MCF 10A (cell line): ENCODE measurements at regions of chr12 and their contacts with region 1.

Region 1: DNA sequence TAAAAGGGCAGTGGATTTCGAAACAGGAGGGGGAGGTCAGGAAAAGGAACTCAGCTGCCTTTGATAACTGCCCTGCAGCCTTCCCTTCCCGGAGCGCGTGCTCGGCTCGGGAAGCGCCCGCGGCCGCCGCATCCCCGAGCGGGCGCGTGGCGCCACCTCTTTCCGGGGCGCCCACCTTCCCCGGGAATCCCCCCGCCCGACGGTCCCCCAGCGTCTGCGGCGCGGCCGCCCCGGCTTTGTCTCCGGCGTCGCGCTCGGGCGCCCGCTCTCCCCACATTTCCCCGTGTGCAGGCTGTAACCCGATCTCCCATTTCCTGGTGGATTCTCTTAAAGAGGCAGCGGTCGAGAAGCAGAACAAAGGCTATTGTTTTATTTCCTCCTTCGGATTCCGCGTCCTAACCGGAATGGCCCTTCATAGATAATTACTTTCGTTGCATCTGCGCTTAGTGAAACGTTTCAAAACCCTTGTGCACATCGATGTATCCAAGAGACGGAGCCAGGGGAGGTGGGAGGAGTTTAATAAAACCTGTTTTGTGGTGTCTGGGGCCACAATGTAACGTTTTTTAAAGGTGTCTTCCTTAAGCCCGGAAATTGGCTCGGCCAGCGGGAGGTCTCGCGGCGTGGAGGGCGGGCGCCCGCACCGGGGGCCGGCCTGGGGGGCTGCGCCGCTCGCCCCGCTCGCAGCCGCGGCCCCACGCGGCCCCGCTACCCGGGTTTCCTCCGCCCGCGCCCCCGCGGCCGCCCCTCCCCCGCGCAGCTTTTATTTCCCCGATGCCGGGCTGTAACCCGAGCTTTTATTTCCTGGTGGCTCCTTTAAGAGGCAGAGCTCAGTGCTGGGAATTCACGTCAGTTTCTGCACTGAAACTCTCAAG is at the start of gene ETV6:
- DNase-seq: peak; percentile 92
- H3K4me3 Mint-ChIP-seq: peak within 1 kb of the TSS; percentile 82
- H3K27ac Mint-ChIP-seq: peak within 1 kb of the TSS; percentile 77
- H3K4me1 Mint-ChIP-seq: peaks cover 15% of the 10 kb centered on the region
- H3K27me3 Mint-ChIP-seq: no peaks in the 10 kb centered on the region
- CTCF ChIP-seq: no peak
- total RNA-seq, gene ETV6: 16.9 and 19.3 TPM in 2 replicates

Region 2: GRCh38 chr12:10901427-10901826 is 747.6 kb before region 1 on chr12:
- CTCF ChIA-PET with region 1: no interaction called
- POLR2A ChIA-PET with region 1: no interaction called
- intact Hi-C with region 1: no loop called
- DNase-seq: no peak
- H3K4me3 Mint-ChIP-seq: no peak overlapping the region
- H3K27ac Mint-ChIP-seq: no peak overlapping the region
- H3K4me1 Mint-ChIP-seq: no peaks in the 10 kb centered on the region
- H3K27me3 Mint-ChIP-seq: no peaks in the 10 kb centered on the region
- CTCF ChIP-seq: no peak

Region 3: DNA sequence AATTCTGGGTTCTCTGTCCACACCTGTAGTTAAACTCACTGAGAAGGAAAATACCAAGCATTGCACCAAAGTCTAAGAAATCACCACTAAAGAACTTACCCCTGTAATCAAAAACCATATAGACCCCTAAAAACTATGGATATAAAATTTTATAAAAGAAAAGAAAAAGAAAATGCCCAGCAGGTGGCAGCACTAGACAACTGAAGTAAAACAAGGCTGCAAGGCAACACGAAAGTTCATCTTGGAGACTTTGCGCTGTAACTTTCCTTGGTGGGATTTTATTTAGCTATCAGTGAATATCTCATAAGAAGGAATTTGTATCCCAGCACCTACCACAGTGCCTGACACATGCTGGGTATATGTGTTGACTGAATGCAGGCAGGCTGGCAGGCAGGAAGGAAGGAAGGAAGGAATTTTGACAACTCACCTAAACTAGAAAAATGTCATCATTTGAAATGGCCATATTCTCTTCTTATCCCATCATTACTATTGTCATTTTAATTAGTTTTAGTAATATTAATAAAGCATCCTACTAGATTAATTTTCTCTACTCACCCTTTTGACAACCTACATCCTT is 67.8 kb before region 1 on chr12:
- CTCF ChIA-PET with region 1: interaction called, 6 read pairs
- POLR2A ChIA-PET with region 1: interaction called, 21 read pairs
- intact Hi-C with region 1: loop called (anchors 1 kb)
- DNase-seq: peak; percentile 76
- H3K4me3 Mint-ChIP-seq: no peak overlapping the region
- H3K27ac Mint-ChIP-seq: no peak overlapping the region
- H3K4me1 Mint-ChIP-seq: peaks cover 44% of the 10 kb centered on the region
- H3K27me3 Mint-ChIP-seq: no peaks in the 10 kb centered on the region
- CTCF ChIP-seq: peak; percentile 52

Region 4: GRCh38 chr12:11695321-11695720 is 46.3 kb after region 1 on chr12:
- CTCF ChIA-PET with region 1: interaction called, 3 read pairs
- POLR2A ChIA-PET with region 1: interaction called, 5 read pairs
- intact Hi-C with region 1: loop called (anchors 5 kb)
- DNase-seq: peak; percentile 63
- H3K4me3 Mint-ChIP-seq: no peak overlapping the region
- H3K27ac Mint-ChIP-seq: peak overlapping the region; percentile 57
- H3K4me1 Mint-ChIP-seq: peaks cover 29% of the 10 kb centered on the region
- H3K27me3 Mint-ChIP-seq: no peaks in the 10 kb centered on the region
- CTCF ChIP-seq: no peak

Region 5: GRCh38 chr12:11785712-11786111 is 136.6 kb after region 1 on chr12:
- CTCF ChIA-PET with region 1: no interaction called
- POLR2A ChIA-PET with region 1: interaction called, 19 read pairs
- intact Hi-C with region 1: loop called (anchors 5 kb)
- DNase-seq: peak; percentile 97
- H3K4me3 Mint-ChIP-seq: no peak overlapping the region
- H3K27ac Mint-ChIP-seq: peak overlapping the region; percentile 34
- H3K4me1 Mint-ChIP-seq: peaks cover 18% of the 10 kb centered on the region
- H3K27me3 Mint-ChIP-seq: no peaks in the 10 kb centered on the region
- CTCF ChIP-seq: no peak

Region 6: GRCh38 chr12:12032851-12033588 is 384.0 kb after region 1 on chr12:
- CTCF ChIA-PET with region 1: interaction called, 3 read pairs
- POLR2A ChIA-PET with region 1: interaction called, 12 read pairs
- intact Hi-C with region 1: loop called (anchors 1 kb)
- DNase-seq: peak; percentile 84
- H3K4me3 Mint-ChIP-seq: no peak overlapping the region
- H3K27ac Mint-ChIP-seq: no peak overlapping the region
- H3K4me1 Mint-ChIP-seq: peaks cover 5% of the 10 kb centered on the region
- H3K27me3 Mint-ChIP-seq: no peaks in the 10 kb centered on the region
- CTCF ChIP-seq: peak; percentile 85